Heart right ventricle (tissue), 16 donors: ENCODE measurements at regions of chr4 and their contacts with region 1.

Region 1: GRCh38 chr4:15655229-15656037 is at the start of gene FBXL5:
- DNase-seq: peak; percentile 77 to 85
- ATAC-seq: peak; percentile 86 to 93 (median 90)
- H3K4me3 ChIP-seq: peak within 1 kb of the TSS; percentile 48 to 85 (median 72)
- H3K27ac ChIP-seq: peak within 1 kb of the TSS; percentile 91 to 100 (median 99)
- H3K4me1 ChIP-seq: peaks cover 0 to 81% (median 42%) of the 10 kb centered on the region in 9 donors
- H3K27me3 ChIP-seq: no peaks in the 10 kb centered on the region
- CTCF ChIP-seq: no peak
- total RNA-seq, gene FBXL5: 63.2 to 102 (median 77.3) TPM

Region 2: GRCh38 chr4:15034071-15034764 is 621.2 kb before region 1 on chr4:
- intact Hi-C with region 1: loop called in 1 of 10 experiments (anchors 10 kb)
- DNase-seq: peak in 1 of 2 donors; percentile 13
- ATAC-seq: peak in 7 of 8 donors; percentile 38 to 80 (median 68)
- H3K4me3 ChIP-seq: peak overlapping the region in 4 of 10 donors; percentile 1 to 24 (median 6)
- H3K27ac ChIP-seq: peak overlapping the region in 9 of 10 donors; percentile 3 to 57 (median 33)
- H3K4me1 ChIP-seq: peaks cover 2 to 83% (median 63%) of the 10 kb centered on the region in 9 donors
- H3K27me3 ChIP-seq: no peaks in the 10 kb centered on the region
- CTCF ChIP-seq: no peak

Region 3: GRCh38 chr4:15231265-15232091 is 424.0 kb before region 1 on chr4:
- intact Hi-C with region 1: loop called in 1 of 10 experiments (anchors 10 kb)
- DNase-seq: peak; percentile 44 to 86
- ATAC-seq: peak; percentile 81 to 87 (median 82)
- H3K4me3 ChIP-seq: no peak overlapping the region
- H3K27ac ChIP-seq: peak overlapping the region in 2 of 10 donors; percentile 17 to 50
- H3K4me1 ChIP-seq: peaks cover 3 to 37% (median 27%) of the 10 kb centered on the region in 9 donors
- H3K27me3 ChIP-seq: no peaks in the 10 kb centered on the region
- CTCF ChIP-seq: peak; percentile 65 to 83 (median 71)

Region 4: DNA sequence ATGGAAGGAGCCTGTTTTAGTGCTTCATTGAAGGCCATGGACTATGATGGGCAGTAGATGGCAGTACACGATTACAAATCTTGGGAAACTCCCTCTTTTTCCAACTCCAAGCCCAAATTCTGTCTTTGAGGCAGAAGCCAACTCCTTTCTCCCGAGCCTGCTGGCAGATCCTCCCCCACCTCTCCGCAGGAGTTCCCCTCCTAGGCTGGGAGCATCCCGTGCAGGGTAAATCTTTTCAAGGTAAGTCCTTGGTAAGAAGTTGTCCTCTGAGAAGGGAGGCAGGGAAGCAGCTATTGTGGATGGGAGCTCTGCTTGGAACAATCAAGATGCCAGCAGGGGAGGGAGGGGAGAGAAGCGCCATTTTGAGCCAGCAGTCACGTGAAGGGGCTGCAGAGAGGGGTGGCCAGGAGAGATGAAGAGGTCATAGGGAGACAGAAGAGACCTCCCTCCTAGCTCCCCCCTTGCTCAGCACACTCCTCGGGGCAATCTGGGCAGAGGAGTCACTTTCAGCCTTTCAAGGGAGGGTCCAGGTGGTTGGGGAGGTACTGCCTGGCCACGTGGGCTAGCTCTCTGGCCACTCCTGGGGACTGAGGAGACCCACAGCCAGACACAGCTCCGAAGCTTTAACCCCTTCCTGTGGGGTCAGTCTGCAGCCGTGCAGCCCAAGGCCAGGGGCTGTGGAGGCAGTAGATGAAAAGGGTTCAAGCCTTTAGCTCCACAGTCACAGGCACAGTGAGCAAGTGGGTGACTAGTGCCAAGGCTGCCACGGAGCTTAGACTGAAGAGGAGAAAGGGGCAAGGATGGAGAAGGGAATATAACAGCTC is 176.1 kb before region 1 on chr4:
- intact Hi-C with region 1: loop called in 6 of 10 experiments (anchors 5 to 10 kb)
- DNase-seq: peak in 1 of 2 donors; percentile 43
- ATAC-seq: peak; percentile 72 to 90 (median 82)
- H3K4me3 ChIP-seq: peak overlapping the region in 9 of 10 donors; percentile 20 to 51 (median 42)
- H3K27ac ChIP-seq: peak overlapping the region in 9 of 10 donors; percentile 57 to 78 (median 68)
- H3K4me1 ChIP-seq: peaks cover 0 to 28% (median 0%) of the 10 kb centered on the region in 9 donors
- H3K27me3 ChIP-seq: no peaks in the 10 kb centered on the region
- CTCF ChIP-seq: peak; percentile 24 to 78 (median 66)

Region 5: GRCh38 chr4:15681207-15682015 is 26.0 kb after region 1 on chr4 and contains the start of gene FAM200B:
- intact Hi-C with region 1: loop called in 2 of 10 experiments (anchors 1 to 2 kb)
- DNase-seq: peak; percentile 99 to 100
- ATAC-seq: peak; percentile 98 to 99 (median 99)
- H3K4me3 ChIP-seq: peak within 1 kb of the TSS; percentile 68 to 94 (median 79)
- H3K27ac ChIP-seq: peak within 1 kb of the TSS; percentile 69 to 95 (median 92)
- H3K4me1 ChIP-seq: peaks cover 0 to 76% (median 28%) of the 10 kb centered on the region in 9 donors
- H3K27me3 ChIP-seq: no peaks in the 10 kb centered on the region
- CTCF ChIP-seq: peak in 3 of 9 donors; percentile 11 to 26 (median 24)
- total RNA-seq, gene FAM200B: 19.7 to 38.7 (median 30.3) TPM

Region 6: DNA sequence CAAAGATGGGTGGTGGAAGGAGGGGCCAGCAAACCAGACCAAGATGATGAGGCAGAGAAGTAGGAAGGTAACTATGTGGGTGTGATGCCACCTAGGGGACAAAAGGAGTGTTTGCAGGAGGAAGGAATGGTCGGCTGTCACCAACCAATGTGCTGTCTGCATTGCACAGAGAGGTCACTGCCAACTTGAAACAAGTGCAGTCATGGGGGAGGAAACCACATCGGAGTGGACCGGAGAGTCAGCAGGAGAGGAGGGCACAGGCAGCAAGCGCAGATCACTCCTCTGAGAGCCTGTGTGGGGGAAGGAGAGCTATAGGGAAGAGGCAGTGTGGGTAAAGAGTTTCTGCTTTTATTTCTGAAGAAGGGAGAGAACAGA is 346.0 kb after region 1 on chr4:
- intact Hi-C with region 1: loop called in 1 of 10 experiments (anchors 10 kb)
- DNase-seq: peak in 1 of 2 donors; percentile 55
- ATAC-seq: peak; percentile 84 to 95 (median 94)
- H3K4me3 ChIP-seq: no peak overlapping the region
- H3K27ac ChIP-seq: no peak overlapping the region
- H3K4me1 ChIP-seq: peaks cover 0 to 13% (median 4%) of the 10 kb centered on the region in 9 donors
- H3K27me3 ChIP-seq: no peaks in the 10 kb centered on the region
- CTCF ChIP-seq: peak; percentile 72 to 88 (median 85)

Region 7: GRCh38 chr4:16196478-16197393 is 541.3 kb after region 1 on chr4:
- intact Hi-C with region 1: no loop called
- DNase-seq: peak in 1 of 2 donors; percentile 31
- ATAC-seq: peak; percentile 73 to 93 (median 84)
- H3K4me3 ChIP-seq: peak overlapping the region in 7 of 10 donors; percentile 4 to 34 (median 26)
- H3K27ac ChIP-seq: peak overlapping the region in 9 of 10 donors; percentile 19 to 73 (median 41)
- H3K4me1 ChIP-seq: peaks cover 0 to 65% (median 55%) of the 10 kb centered on the region in 9 donors
- H3K27me3 ChIP-seq: no peaks in the 10 kb centered on the region
- CTCF ChIP-seq: peak in 7 of 9 donors; percentile 39 to 67 (median 51)